IMR-90 (cell line): ENCODE measurements at regions of chr14 and their contacts with region 1.

Region 1: DNA sequence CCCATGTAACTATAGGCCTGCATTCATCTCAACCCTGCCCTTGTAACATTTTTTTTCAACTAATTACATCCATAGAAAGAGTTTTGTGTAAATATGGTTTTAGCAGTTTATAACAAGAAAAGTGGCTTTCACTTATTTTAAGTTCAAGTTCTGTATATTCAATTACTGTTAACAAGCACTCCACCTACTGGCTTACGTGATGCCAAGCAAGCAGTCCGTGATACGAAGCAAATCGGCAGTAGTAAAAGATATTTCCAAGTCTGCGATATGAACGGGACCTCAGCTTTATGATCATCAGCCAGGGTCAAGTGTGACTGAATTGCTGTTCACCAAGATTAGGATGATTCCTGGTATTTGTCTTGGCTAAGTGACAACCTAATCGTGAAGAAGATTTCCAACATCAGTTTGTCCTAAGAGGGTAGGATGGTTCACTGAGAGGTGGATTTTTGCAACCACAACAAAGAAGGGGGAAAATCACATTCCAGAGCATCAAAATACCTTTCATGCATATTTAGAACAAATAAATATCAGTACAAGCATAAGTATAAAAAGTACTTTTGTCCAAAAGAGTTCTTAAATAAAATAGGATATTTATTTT is 456.2 kb downstream of the FOXG1 start:
- DNase-seq: peak; percentile 73
- ATAC-seq: peak; percentile 88
- H3K4me3 ChIP-seq: no peak overlapping the region
- H3K27ac ChIP-seq: no peak overlapping the region
- H3K4me1 ChIP-seq: no peaks in the 10 kb centered on the region; the same call in 1 of the 2 replicates
- H3K27me3 ChIP-seq: no peaks in the 10 kb centered on the region
- CTCF ChIP-seq: peak; percentile 78
- POLR2A ChIP-seq: no peak
- RAD21 ChIP-seq: peak; percentile 79

Region 2: DNA sequence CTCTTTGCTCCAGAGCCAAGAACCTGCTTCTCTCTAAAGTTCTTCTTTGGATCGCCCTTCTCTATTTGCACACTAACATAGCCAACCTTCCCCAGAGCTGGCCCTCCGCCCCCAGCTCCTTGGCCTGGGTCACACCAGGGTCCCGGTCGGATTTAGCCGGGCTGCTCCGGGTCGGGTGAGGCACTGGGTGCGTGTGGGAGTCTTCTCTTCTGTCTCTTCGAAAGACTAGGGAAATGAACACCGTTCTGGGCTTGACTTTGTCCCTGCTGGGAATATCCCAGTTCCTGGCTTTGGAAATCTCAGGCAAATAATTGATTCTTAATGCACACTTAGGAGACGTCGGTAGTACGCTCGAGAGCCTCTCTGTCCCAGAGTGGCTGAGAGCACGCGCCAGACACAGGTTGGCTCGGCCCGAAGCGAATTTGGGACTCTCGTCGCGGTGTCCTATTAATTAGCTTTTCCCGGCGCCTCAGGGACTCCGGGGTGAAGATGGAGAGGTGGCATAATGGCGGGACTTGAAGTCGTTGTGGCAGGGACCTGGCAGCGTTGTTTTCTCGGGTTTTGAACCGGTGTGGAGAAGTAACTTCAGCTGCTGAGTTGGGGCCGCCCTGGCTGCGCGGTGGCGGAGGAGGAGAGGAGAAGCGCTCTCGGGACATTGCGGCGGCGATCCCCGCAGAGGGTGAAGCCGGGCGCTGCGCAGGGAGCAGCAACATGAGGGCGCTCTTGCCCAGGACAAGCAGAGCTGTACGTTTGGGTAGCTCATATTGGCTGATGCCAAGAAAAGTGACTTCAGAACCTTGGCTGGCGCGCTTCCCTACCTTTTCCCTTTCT is 448.7 kb before region 1 on chr14:
- CTCF ChIA-PET with region 1: no interaction called
- POLR2A ChIA-PET with region 1: no interaction called
- dilution Hi-C with region 1: no loop called
- in situ Hi-C with region 1: loop called (anchors 10 kb)
- intact Hi-C with region 1: no loop called
- DNase-seq: peak; percentile 30
- ATAC-seq: peak; percentile 64
- H3K4me3 ChIP-seq: 0 out of 2 replicates have a peak overlapping the region, but pooled peaks have one; percentile 22
- H3K27ac ChIP-seq: no peak overlapping the region
- H3K4me1 ChIP-seq: no peaks in the 10 kb centered on the region
- H3K27me3 ChIP-seq: peaks cover 48% of the 10 kb centered on the region
- CTCF ChIP-seq: peak; percentile 40
- POLR2A ChIP-seq: no peak
- RAD21 ChIP-seq: peak; percentile 52

Region 3: GRCh38 chr14:29028973-29029582 is 193.7 kb before region 1 on chr14:
- CTCF ChIA-PET with region 1: no interaction called
- POLR2A ChIA-PET with region 1: no interaction called
- dilution Hi-C with region 1: no loop called
- in situ Hi-C with region 1: loop called (anchors 10 kb)
- intact Hi-C with region 1: no loop called
- DNase-seq: peak; percentile 50
- ATAC-seq: peak; percentile 77
- H3K4me3 ChIP-seq: no peak overlapping the region
- H3K27ac ChIP-seq: peak overlapping the region; percentile 9; the same call in 1 of the 2 replicates
- H3K4me1 ChIP-seq: peaks cover 7% of the 10 kb centered on the region
- H3K27me3 ChIP-seq: no peaks in the 10 kb centered on the region
- CTCF ChIP-seq: no peak
- POLR2A ChIP-seq: no peak
- RAD21 ChIP-seq: no peak

Region 4: DNA sequence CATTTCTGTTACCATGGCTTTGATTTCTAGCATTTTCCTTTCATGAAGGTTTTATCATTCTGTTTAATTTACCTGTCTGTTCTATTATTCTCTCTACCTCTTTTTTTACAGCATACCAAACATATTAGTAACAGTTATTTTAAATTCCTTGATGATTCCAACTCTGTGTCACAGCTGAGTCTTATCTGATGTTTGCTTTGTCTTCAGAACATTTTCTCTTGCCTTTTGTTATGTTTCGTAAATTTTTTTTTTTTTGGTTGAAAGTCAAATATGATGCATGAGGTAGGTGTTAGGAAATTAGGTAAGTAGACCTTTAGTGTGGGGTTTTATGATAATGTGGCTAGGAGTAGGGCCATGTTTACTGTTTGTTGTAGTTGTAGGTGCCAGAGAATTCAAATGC is 40.2 kb after region 1 on chr14:
- CTCF ChIA-PET with region 1: no interaction called
- POLR2A ChIA-PET with region 1: no interaction called
- dilution Hi-C with region 1: no loop called
- in situ Hi-C with region 1: no loop called
- intact Hi-C with region 1: no loop called
- DNase-seq: peak; percentile 20
- ATAC-seq: no peak
- H3K4me3 ChIP-seq: no peak overlapping the region
- H3K27ac ChIP-seq: no peak overlapping the region
- H3K4me1 ChIP-seq: peaks cover 2% of the 10 kb centered on the region; the same call in 1 of the 2 replicates
- H3K27me3 ChIP-seq: no peaks in the 10 kb centered on the region
- CTCF ChIP-seq: no peak
- POLR2A ChIP-seq: no peak
- RAD21 ChIP-seq: no peak

Region 5: GRCh38 chr14:29521526-29522137 is 298.9 kb after region 1 on chr14:
- CTCF ChIA-PET with region 1: no interaction called
- POLR2A ChIA-PET with region 1: no interaction called
- dilution Hi-C with region 1: no loop called
- in situ Hi-C with region 1: loop called (anchors 10 kb)
- intact Hi-C with region 1: loop called (anchors 2 kb)
- DNase-seq: peak; percentile 6
- ATAC-seq: no peak
- H3K4me3 ChIP-seq: no peak overlapping the region
- H3K27ac ChIP-seq: no peak overlapping the region
- H3K4me1 ChIP-seq: no peaks in the 10 kb centered on the region
- H3K27me3 ChIP-seq: no peaks in the 10 kb centered on the region
- CTCF ChIP-seq: peak; percentile 32
- POLR2A ChIP-seq: no peak
- RAD21 ChIP-seq: peak; percentile 47